Naive thymus-derived CD4-positive, alpha-beta T cell (primary cell): ENCODE measurements at regions of chr19 and their contacts with region 1.

Region 1: GRCh38 chr19:9140159-9140874 is at the start of gene ZNF317:
- DNase-seq: peak; percentile 72 to 94 (median 88)
- ATAC-seq: peak; percentile 94
- H3K4me3 ChIP-seq: peak within 1 kb of the TSS; percentile 94
- H3K4me3 Mint-ChIP-seq: peak within 1 kb of the TSS; percentile 93 to 99 (median 98)
- H3K27ac ChIP-seq: peak within 1 kb of the TSS; percentile 95
- H3K27ac Mint-ChIP-seq: peak within 1 kb of the TSS; percentile 95 to 99 (median 97)
- H3K4me1 ChIP-seq: peaks cover 17 to 21% of the 10 kb centered on the region in 2 donors
- H3K4me1 Mint-ChIP-seq: peaks cover 28 to 55% (median 49%) of the 10 kb centered on the region in 7 donors
- H3K27me3 ChIP-seq: no peaks in the 10 kb centered on the region
- H3K27me3 Mint-ChIP-seq: peaks cover 0 to 7% (median 0%) of the 10 kb centered on the region in 5 donors
- total RNA-seq, gene ZNF317: 39.4 to 75.5 (median 54.5) TPM

Region 2: GRCh38 chr19:9128171-9128570 is 12.1 kb before region 1 on chr19:
- CTCF ChIA-PET with region 1: no interaction called
- POLR2A ChIA-PET with region 1: no interaction called
- intact Hi-C with region 1: no loop called
- DNase-seq: no peak
- ATAC-seq: no peak
- H3K4me3 ChIP-seq: no peak overlapping the region
- H3K4me3 Mint-ChIP-seq: no peak overlapping the region
- H3K27ac ChIP-seq: no peak overlapping the region
- H3K27ac Mint-ChIP-seq: no peak overlapping the region
- H3K4me1 ChIP-seq: no peaks in the 10 kb centered on the region
- H3K4me1 Mint-ChIP-seq: peaks cover 0 to 9% (median 8%) of the 10 kb centered on the region in 7 donors
- H3K27me3 ChIP-seq: no peaks in the 10 kb centered on the region
- H3K27me3 Mint-ChIP-seq: peaks cover 0 to 44% (median 27%) of the 10 kb centered on the region in 5 donors

Region 3: GRCh38 chr19:9205501-9206113 is 65.3 kb after region 1 on chr19:
- CTCF ChIA-PET with region 1: no interaction called
- POLR2A ChIA-PET with region 1: no interaction called
- intact Hi-C with region 1: loop called (anchors 1 kb)
- DNase-seq: peak; percentile 36 to 63 (median 53)
- ATAC-seq: peak; percentile 69
- H3K4me3 ChIP-seq: no peak overlapping the region
- H3K4me3 Mint-ChIP-seq: peak overlapping the region in 9 of 10 donors; percentile 37 to 69 (median 56)
- H3K27ac ChIP-seq: no peak overlapping the region
- H3K27ac Mint-ChIP-seq: no peak overlapping the region
- H3K4me1 ChIP-seq: no peaks in the 10 kb centered on the region
- H3K4me1 Mint-ChIP-seq: peaks cover 0 to 8% (median 0%) of the 10 kb centered on the region in 7 donors
- H3K27me3 ChIP-seq: no peaks in the 10 kb centered on the region
- H3K27me3 Mint-ChIP-seq: peaks cover 0 to 22% (median 6%) of the 10 kb centered on the region in 5 donors

Region 4: GRCh38 chr19:9435279-9436268 is 295.3 kb after region 1 on chr19 and contains the start of gene ZNF266:
- CTCF ChIA-PET with region 1: no interaction called
- POLR2A ChIA-PET with region 1: interaction called, 8 read pairs
- intact Hi-C with region 1: loop called (anchors 1 kb)
- DNase-seq: peak; percentile 82 to 93 (median 91)
- ATAC-seq: peak; percentile 92
- H3K4me3 ChIP-seq: peak within 1 kb of the TSS; percentile 73
- H3K4me3 Mint-ChIP-seq: peak within 1 kb of the TSS; percentile 89 to 97 (median 93)
- H3K27ac ChIP-seq: peak within 1 kb of the TSS; percentile 94
- H3K27ac Mint-ChIP-seq: peak within 1 kb of the TSS; percentile 95 to 99 (median 98)
- H3K4me1 ChIP-seq: peaks cover 26 to 27% of the 10 kb centered on the region in 2 donors
- H3K4me1 Mint-ChIP-seq: peaks cover 20 to 54% (median 48%) of the 10 kb centered on the region in 7 donors
- H3K27me3 ChIP-seq: no peaks in the 10 kb centered on the region
- H3K27me3 Mint-ChIP-seq: no peaks in the 10 kb centered on the region
- total RNA-seq, gene ZNF266: 34.0 to 73.9 (median 55.0) TPM

Region 5: DNA sequence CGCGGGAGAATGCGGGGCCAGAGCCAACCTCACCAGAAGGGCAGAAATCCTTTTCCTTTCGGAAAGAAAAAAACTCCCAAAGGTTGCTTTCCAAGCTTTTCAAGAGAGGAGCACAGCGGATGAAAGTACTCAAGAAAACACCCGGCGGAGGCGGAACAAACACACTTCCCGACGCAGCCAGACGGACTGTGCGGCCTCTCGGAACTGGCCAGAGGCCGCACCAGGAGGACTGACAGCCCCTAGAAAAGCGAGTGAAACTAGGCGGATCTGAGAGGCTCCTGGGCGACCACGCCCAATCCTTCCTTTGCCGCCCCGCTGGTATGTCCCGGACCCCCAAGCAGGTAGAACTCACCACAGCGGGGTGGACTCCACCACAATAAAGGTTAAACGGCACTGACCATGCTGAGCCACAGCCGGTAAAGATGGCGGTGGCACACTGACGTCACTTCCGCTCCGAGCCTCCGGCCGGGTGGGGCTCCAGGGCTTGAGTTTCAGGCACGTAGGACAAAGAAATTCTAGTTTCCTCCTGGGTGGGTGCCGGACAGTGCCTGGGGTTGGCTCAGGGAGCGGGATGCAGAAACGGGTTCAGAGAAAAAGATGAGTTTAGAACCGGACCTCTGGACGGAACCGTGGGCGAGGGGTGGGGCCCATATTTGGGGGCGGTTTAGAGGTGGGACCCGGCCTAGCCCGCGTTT is 534.5 kb after region 1 on chr19 and contains the start of gene ZNF562:
- CTCF ChIA-PET with region 1: no interaction called
- POLR2A ChIA-PET with region 1: no interaction called
- intact Hi-C with region 1: loop called in 1 of 2 experiments (anchors 1 kb)
- DNase-seq: peak; percentile 66 to 82 (median 76)
- ATAC-seq: peak; percentile 92
- H3K4me3 ChIP-seq: peak within 1 kb of the TSS; percentile 99
- H3K4me3 Mint-ChIP-seq: peak within 1 kb of the TSS; percentile 86 to 99 (median 96)
- H3K27ac ChIP-seq: peak within 1 kb of the TSS; percentile 91
- H3K27ac Mint-ChIP-seq: peak within 1 kb of the TSS; percentile 87 to 99 (median 96)
- H3K4me1 ChIP-seq: peaks cover 0 to 4% of the 10 kb centered on the region in 2 donors
- H3K4me1 Mint-ChIP-seq: peaks cover 11 to 33% (median 29%) of the 10 kb centered on the region in 7 donors
- H3K27me3 ChIP-seq: no peaks in the 10 kb centered on the region
- H3K27me3 Mint-ChIP-seq: no peaks in the 10 kb centered on the region
- total RNA-seq, gene ZNF562: 8.9 to 18.6 (median 16.5) TPM

Region 6: DNA sequence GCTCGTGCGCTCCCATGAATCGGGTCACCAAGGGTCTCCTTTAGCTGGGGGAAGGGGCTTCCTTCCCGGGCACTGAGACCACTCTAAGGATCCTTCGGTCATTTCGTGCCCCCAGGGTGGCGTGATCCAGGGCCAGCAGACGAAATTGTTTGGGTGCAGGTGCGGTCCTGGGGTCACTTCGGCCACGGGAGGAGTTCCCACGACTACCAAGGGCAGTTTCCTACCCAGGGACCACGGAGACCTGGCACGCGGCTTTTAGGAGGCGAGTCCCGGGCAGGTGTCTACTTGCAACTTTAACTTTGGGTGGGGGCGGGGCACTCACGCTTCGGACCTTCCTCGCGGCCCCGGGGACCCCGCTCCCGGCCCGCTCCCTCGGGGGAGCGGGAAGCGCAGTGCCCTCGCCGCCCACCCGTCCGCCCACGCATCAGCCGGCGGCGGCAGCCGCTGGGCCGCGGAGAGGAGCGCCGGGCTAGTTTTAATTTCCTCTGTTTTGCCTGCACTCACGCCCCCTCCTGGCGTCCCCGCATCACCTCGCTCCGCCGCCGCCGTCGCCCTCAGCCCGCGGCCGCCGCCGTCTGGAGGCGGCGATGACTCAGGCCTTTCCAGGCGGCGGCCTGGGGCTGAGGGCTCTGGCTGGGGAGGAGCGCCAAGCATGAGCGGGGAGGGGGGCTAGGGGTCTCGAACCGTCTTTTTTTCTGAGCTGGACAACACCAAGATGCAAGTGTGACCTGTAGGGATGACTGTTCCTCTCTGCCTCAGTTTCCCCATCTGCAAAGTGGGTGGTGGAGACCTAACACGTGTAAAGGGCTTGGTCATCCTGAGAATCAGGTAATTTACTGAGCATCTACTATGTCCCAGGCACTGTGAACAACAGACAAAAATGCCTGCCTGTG is 774.2 kb after region 1 on chr19:
- CTCF ChIA-PET with region 1: no interaction called
- POLR2A ChIA-PET with region 1: no interaction called
- intact Hi-C with region 1: loop called (anchors 1 to 5 kb)
- DNase-seq: peak; percentile 59 to 83 (median 72)
- ATAC-seq: peak; percentile 95
- H3K4me3 ChIP-seq: peak overlapping the region; percentile 64
- H3K4me3 Mint-ChIP-seq: peak overlapping the region; percentile 66 to 86 (median 72)
- H3K27ac ChIP-seq: no peak overlapping the region
- H3K27ac Mint-ChIP-seq: no peak overlapping the region
- H3K4me1 ChIP-seq: peaks cover 3 to 5% of the 10 kb centered on the region in 2 donors
- H3K4me1 Mint-ChIP-seq: peaks cover 6 to 12% (median 9%) of the 10 kb centered on the region in 7 donors
- H3K27me3 ChIP-seq: peaks cover 0 to 13% of the 10 kb centered on the region in 2 donors
- H3K27me3 Mint-ChIP-seq: peaks cover 22 to 33% (median 27%) of the 10 kb centered on the region in 5 donors